Upper lobe of right lung (tissue), 1 donor: ENCODE measurements at regions of chr6 and their contacts with region 1.

Region 1: DNA sequence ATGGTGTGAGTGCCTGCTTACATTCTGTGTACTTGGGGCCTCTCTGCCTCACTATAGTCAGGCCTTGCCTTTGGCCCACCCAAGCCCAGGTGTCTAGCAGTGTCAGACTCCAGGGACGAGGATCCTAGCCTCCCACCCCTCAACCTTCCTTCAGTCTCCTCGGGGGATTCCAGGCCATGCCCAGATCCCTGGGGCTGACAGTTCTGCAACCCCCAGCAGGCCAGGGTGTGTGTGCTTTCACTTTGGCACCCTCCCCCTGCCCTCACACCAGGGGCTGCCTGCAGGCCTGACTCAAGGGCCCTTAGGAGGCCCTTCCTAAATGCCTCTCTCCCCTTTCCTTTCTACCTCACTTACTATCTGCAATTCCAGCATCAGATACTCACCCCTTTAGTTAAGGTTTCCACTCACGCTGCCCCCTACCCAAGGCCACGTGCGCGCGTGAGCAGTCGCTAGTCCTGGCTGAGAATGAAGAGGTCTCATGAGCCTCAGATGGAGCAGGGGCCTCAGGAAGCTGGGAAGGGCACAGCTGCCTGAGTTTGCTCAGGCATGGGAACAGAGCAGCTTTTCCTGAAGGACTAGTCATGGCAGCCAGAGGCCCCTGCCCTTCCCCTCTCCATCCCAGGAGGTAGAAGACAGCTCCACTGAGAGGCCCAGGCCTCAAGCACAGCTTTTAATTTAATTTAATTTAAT is 859 bp upstream of the CLPS start:
- DNase-seq: no peak
- ATAC-seq: peak; percentile 29
- H3K4me3 ChIP-seq: no peak overlapping the region
- H3K27ac ChIP-seq: no peak overlapping the region
- H3K4me1 ChIP-seq: no peaks in the 10 kb centered on the region
- H3K27me3 ChIP-seq: no peaks in the 10 kb centered on the region
- CTCF ChIP-seq: no peak

Region 2: DNA sequence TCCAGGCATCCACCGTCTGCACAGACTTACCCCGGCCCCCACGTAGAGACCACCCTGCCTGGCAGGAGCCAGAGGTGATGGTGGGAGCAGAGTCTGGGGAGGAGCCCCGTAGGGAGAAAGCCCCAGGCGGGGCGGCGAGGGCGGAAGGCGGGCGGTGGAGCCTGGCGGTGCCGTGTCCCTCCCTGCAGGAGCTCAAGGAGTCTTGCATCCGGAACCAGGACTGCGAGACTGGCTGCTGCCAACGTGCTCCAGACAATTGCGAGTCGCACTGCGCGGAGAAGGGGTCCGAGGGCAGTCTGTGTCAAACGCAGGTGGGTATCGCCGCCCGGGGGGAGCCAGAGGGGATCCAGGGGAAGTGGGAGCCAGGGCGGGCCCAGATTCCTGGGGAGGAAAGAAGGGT is 11.2 kb before region 1 on chr6:
- intact Hi-C with region 1: loop called (anchors 1 kb)
- DNase-seq: peak; percentile 70
- ATAC-seq: peak; percentile 51
- H3K4me3 ChIP-seq: no peak overlapping the region
- H3K27ac ChIP-seq: no peak overlapping the region
- H3K4me1 ChIP-seq: peaks cover 4% of the 10 kb centered on the region
- H3K27me3 ChIP-seq: peaks cover 49% of the 10 kb centered on the region
- CTCF ChIP-seq: no peak

Region 3: DNA sequence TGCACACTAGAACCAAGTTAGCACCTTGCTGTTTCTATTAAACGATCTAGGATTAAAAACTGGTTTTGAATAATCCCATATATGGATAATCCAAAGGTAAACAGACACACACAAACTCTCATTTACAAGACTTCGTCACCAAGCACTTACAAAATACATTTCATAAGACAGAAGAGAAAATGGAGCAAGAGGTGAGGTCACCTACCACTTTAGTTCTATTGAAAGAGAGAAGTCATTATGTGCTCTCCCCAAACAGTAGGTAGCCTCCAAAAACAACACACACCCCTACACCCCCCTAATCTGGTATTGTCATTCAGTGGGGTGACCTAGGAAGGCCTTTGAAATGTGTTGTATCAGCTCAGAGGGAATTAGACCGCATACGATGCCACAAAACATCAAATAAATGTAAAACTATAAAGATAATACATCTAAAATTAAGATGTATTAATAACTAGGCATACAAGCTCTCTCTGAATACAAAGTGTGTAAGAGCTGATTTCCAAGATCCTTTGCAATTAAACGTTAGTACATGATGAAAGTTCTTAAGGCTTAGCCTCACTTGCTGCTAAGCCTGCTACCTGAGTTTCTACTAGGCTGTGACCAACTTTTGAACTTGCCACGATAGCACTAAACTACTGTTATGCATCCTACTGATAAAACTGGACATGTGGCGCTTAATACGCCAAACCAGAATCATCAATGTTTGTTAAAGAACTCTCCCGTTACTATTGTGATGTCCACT is 121.3 kb after region 1 on chr6:
- intact Hi-C with region 1: no loop called
- DNase-seq: no peak
- ATAC-seq: peak; percentile 16
- H3K4me3 ChIP-seq: peak overlapping the region; percentile 80
- H3K27ac ChIP-seq: peak overlapping the region; percentile 73
- H3K4me1 ChIP-seq: peaks cover 24% of the 10 kb centered on the region
- H3K27me3 ChIP-seq: no peaks in the 10 kb centered on the region
- CTCF ChIP-seq: no peak